CD8-positive, alpha-beta T cell (primary cell): ENCODE measurements at regions of chr6 and their contacts with region 1.

Region 1: GRCh38 chr6:26607434-26608230 is 10.9 kb downstream of the ABT1 start:
- DNase-seq: peak in 7 of 9 experiments; percentile 37 to 78 (median 64)
- ATAC-seq: peak; percentile 98
- H3K4me3 ChIP-seq: peak overlapping the region in 1 of 2 experiments; percentile 16
- H3K4me3 Mint-ChIP-seq: peak overlapping the region; percentile 70
- H3K27ac ChIP-seq: no peak overlapping the region
- H3K27ac Mint-ChIP-seq: peak overlapping the region; percentile 3
- H3K4me1 ChIP-seq: no peaks in the 10 kb centered on the region
- H3K4me1 Mint-ChIP-seq: peaks cover 10% of the 10 kb centered on the region
- H3K27me3 ChIP-seq: no peaks in the 10 kb centered on the region
- H3K27me3 Mint-ChIP-seq: peaks cover 6% of the 10 kb centered on the region
- CTCF ChIP-seq: peak; percentile 72

Region 2: GRCh38 chr6:26659042-26659999 is 51.7 kb after region 1 on chr6 and contains the start of gene ZNF322:
- CTCF ChIA-PET with region 1: interaction called, 3 read pairs
- POLR2A ChIA-PET with region 1: no interaction called
- intact Hi-C with region 1: loop called in 1 of 2 experiments (anchors 2 kb)
- DNase-seq: peak; percentile 69 to 92 (median 86)
- ATAC-seq: peak; percentile 96
- H3K4me3 ChIP-seq: peak within 1 kb of the TSS; percentile 82 to 90
- H3K4me3 Mint-ChIP-seq: peak within 1 kb of the TSS; percentile 86
- H3K27ac ChIP-seq: peak within 1 kb of the TSS; percentile 55 to 60
- H3K27ac Mint-ChIP-seq: peak within 1 kb of the TSS; percentile 56
- H3K4me1 ChIP-seq: peaks cover 9% of the 10 kb centered on the region
- H3K4me1 Mint-ChIP-seq: peaks cover 36% of the 10 kb centered on the region
- H3K27me3 ChIP-seq: peaks cover 0 to 7% of the 10 kb centered on the region in 2 experiments
- H3K27me3 Mint-ChIP-seq: peaks cover 17% of the 10 kb centered on the region
- CTCF ChIP-seq: no peak
- total RNA-seq, gene ZNF322: 0.35 to 0.94 TPM

Region 3: GRCh38 chr6:27078734-27079357 is 471.2 kb after region 1 on chr6:
- CTCF ChIA-PET with region 1: interaction called, 16 read pairs
- POLR2A ChIA-PET with region 1: no interaction called
- intact Hi-C with region 1: loop called (anchors 1 kb)
- DNase-seq: peak in 7 of 9 experiments; percentile 18 to 69 (median 39)
- ATAC-seq: peak; percentile 71
- H3K4me3 ChIP-seq: peak overlapping the region; percentile 16 to 23
- H3K4me3 Mint-ChIP-seq: peak overlapping the region; percentile 62
- H3K27ac ChIP-seq: no peak overlapping the region
- H3K27ac Mint-ChIP-seq: no peak overlapping the region
- H3K4me1 ChIP-seq: no peaks in the 10 kb centered on the region
- H3K4me1 Mint-ChIP-seq: peaks cover 5% of the 10 kb centered on the region
- H3K27me3 ChIP-seq: peaks cover 0 to 2% of the 10 kb centered on the region in 2 experiments
- H3K27me3 Mint-ChIP-seq: peaks cover 44% of the 10 kb centered on the region
- CTCF ChIP-seq: no peak

Region 4: GRCh38 chr6:27503436-27504030 is 895.9 kb after region 1 on chr6:
- CTCF ChIA-PET with region 1: no interaction called
- POLR2A ChIA-PET with region 1: no interaction called
- intact Hi-C with region 1: loop called in 1 of 2 experiments (anchors 10 kb)
- DNase-seq: peak; percentile 58 to 90 (median 79)
- ATAC-seq: peak; percentile 62
- H3K4me3 ChIP-seq: peak overlapping the region; percentile 61 to 70
- H3K4me3 Mint-ChIP-seq: peak overlapping the region; percentile 94
- H3K27ac ChIP-seq: peak overlapping the region; percentile 34 to 46
- H3K27ac Mint-ChIP-seq: peak overlapping the region; percentile 90
- H3K4me1 ChIP-seq: peaks cover 11% of the 10 kb centered on the region
- H3K4me1 Mint-ChIP-seq: peaks cover 38% of the 10 kb centered on the region
- H3K27me3 ChIP-seq: peaks cover 0 to 7% of the 10 kb centered on the region in 2 experiments
- H3K27me3 Mint-ChIP-seq: peaks cover 4% of the 10 kb centered on the region
- CTCF ChIP-seq: no peak